Activated naive CD4-positive, alpha-beta T cell treated with anti-CD3 and anti-CD28 coated beads for 36 hours (primary cell): ENCODE measurements at regions of chr14 and their contacts with region 1.

Region 1: GRCh38 chr14:24241829-24242443 is 487 bp downstream of the TINF2 start:
- DNase-seq: peak; percentile 94
- H3K4me3 Mint-ChIP-seq: peak overlapping the region; percentile 97
- H3K27ac Mint-ChIP-seq: peak overlapping the region; percentile 100
- H3K4me1 Mint-ChIP-seq: peaks cover 49% of the 10 kb centered on the region
- H3K27me3 Mint-ChIP-seq: no peaks in the 10 kb centered on the region

Region 2: GRCh38 chr14:24093901-24094761 is 147.8 kb before region 1 on chr14 and contains the start of gene PCK2:
- CTCF ChIA-PET with region 1: no interaction called
- intact Hi-C with region 1: no loop called
- DNase-seq: peak; percentile 94
- H3K4me3 Mint-ChIP-seq: peak within 1 kb of the TSS; percentile 99
- H3K27ac Mint-ChIP-seq: peak within 1 kb of the TSS; percentile 98
- H3K4me1 Mint-ChIP-seq: peaks cover 32% of the 10 kb centered on the region
- H3K27me3 Mint-ChIP-seq: no peaks in the 10 kb centered on the region
- total RNA-seq, gene PCK2: 117 TPM

Region 3: DNA sequence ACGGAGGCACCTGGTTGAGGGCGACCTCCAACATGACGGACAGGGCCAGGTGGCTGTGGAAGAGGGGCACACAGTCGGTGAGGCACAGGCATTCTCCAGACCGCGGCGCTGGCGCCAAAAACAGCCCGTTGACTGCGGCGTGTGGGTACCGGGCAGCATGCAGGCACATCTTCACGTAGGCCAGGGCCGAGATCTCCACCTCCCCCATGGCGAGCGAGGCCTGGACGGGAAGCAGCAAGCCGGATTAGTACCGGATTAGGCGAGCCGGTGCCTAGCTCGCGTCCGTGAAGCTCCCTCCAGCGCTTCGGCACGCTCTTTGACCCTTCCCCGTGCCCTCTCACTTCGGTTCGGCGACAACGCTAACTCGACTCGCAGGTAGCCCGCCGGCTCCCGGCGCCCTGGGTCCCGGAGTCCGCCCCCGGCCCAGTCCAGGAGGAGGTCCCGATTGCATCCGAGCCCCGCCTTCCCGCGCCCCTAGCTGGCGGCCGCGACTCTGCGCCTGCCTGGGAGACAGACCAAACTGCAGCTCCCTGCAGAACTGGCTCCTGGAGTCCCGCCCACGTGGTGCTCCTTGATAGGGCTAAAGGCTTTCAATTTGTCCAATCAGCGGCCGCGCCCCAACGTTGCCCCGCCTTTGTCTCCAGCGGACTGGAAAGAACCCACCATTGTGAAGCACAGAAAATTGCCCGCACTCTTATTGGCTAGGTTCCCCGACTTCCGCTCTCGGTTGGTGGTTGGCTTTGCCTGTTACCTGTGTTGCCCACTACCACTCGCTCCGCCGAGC is 100.6 kb before region 1 on chr14 and contains the start of gene EMC9:
- CTCF ChIA-PET with region 1: no interaction called
- intact Hi-C with region 1: loop called (anchors 1 kb)
- DNase-seq: peak; percentile 100
- H3K4me3 Mint-ChIP-seq: peak within 1 kb of the TSS; percentile 99
- H3K27ac Mint-ChIP-seq: peak within 1 kb of the TSS; percentile 93
- H3K4me1 Mint-ChIP-seq: peaks cover 73% of the 10 kb centered on the region
- H3K27me3 Mint-ChIP-seq: no peaks in the 10 kb centered on the region
- total RNA-seq, gene EMC9: 38.4 to 38.9 TPM

Region 4: GRCh38 chr14:24195191-24196070 is 46.5 kb before region 1 on chr14 and contains the start of gene TM9SF1:
- CTCF ChIA-PET with region 1: interaction called, 10 read pairs
- intact Hi-C with region 1: loop called (anchors 1 kb)
- DNase-seq: peak; percentile 89
- H3K4me3 Mint-ChIP-seq: peak within 1 kb of the TSS; percentile 96
- H3K27ac Mint-ChIP-seq: peak within 1 kb of the TSS; percentile 93
- H3K4me1 Mint-ChIP-seq: peaks cover 56% of the 10 kb centered on the region
- H3K27me3 Mint-ChIP-seq: no peaks in the 10 kb centered on the region
- total RNA-seq, gene TM9SF1: 14.7 to 15.1 TPM

Region 5: GRCh38 chr14:24279301-24280186 is 37.6 kb after region 1 on chr14:
- CTCF ChIA-PET with region 1: interaction called, 40 read pairs
- intact Hi-C with region 1: no loop called
- DNase-seq: peak; percentile 90
- H3K4me3 Mint-ChIP-seq: peak overlapping the region; percentile 20
- H3K27ac Mint-ChIP-seq: peak overlapping the region; percentile 80
- H3K4me1 Mint-ChIP-seq: peaks cover 52% of the 10 kb centered on the region
- H3K27me3 Mint-ChIP-seq: no peaks in the 10 kb centered on the region

Region 6: DNA sequence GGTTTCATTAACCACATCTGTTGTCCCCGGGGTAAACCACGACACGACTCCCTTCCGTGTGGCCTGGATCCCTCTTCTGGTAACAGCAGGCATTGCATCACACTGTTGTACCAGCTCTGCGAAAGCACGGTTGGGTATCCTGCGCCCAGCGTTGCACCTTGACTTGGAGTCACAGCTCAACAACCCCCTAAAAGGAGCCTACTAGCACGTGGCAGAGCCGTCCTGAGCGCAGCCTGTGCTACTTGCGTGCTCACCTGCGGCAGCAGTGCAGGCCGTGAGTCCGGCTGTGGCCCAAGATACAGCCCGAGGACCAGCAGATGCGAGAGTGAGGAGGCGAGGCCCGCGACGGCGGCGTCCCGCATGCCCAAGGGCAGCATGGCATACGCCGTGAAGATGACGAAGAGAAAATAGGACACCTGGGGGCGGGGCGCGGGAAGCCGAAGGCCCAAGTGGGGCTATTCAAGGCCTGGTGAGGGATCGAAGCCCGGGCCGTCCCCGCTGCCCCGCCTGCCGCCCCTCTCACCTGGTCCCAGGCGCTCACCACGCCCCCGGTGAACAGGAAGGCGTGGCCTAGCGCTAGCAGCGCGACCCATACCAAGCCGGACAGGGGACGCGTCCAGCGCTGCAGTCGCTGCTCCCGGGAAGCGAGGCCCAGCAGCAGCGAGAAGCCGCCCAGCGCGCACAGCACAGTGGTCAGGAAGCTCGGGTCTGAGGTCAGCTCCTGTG is 90.5 kb after region 1 on chr14:
- CTCF ChIA-PET with region 1: interaction called, 15 read pairs
- intact Hi-C with region 1: loop called (anchors 1 kb)
- DNase-seq: peak; percentile 91
- H3K4me3 Mint-ChIP-seq: peak overlapping the region; percentile 71
- H3K27ac Mint-ChIP-seq: no peak overlapping the region
- H3K4me1 Mint-ChIP-seq: peaks cover 28% of the 10 kb centered on the region
- H3K27me3 Mint-ChIP-seq: peaks cover 24% of the 10 kb centered on the region

Region 7: GRCh38 chr14:24403294-24403998 is 161.5 kb after region 1 on chr14:
- CTCF ChIA-PET with region 1: no interaction called
- intact Hi-C with region 1: no loop called
- DNase-seq: no peak
- H3K4me3 Mint-ChIP-seq: no peak overlapping the region
- H3K27ac Mint-ChIP-seq: no peak overlapping the region
- H3K4me1 Mint-ChIP-seq: peaks cover 6% of the 10 kb centered on the region
- H3K27me3 Mint-ChIP-seq: peaks cover 2% of the 10 kb centered on the region